Activated naive CD8-positive, alpha-beta T cell treated with anti-CD3 and anti-CD28 coated beads, Interleukin-2, amount 10 ng/mL, durations not matched to agents 7 days and 5 days (primary cell): ENCODE measurements at regions of chr3 and their contacts with region 1.

Region 1: DNA sequence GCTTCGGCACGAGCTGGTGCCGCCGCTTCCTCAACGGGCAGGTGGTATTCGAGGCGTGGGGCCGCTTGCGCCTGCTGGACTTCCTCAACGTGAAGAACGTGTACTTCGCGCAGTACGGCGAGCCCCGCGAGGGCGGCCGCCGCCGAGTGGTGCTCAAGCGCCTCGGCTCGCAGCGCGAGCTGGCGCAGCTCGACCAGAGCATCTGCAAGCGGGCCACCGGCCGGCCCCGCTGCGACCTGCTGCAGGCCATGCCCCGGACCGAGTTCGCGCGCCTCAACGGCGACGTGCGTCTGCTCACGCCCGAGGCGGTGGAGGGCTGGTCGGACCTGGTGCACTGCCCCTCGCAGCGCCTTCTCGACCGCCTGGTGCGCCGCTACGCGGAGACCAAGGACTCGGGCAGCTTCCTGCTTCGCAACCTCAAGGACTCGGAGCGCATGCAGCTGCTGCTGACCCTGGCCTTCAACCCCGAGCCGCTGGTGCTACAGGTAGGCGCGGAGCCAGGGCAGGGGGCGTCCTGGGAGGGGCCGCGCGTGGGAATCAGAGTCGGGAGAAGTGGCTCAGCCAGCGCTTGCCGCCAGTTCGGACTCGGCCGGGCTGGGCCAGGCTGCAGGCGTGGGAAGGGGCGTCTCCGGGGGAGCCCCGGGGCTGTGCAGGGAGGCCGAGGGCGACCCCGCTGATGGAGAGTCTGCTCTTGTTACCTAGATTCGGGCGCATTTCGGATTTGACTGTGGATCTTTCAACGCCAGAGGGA is 1.1 kb downstream of the DIPK2A start:
- DNase-seq: peak; percentile 78
- ATAC-seq: peak; percentile 15
- H3K4me3 Mint-ChIP-seq: peak overlapping the region; percentile 96
- H3K27ac Mint-ChIP-seq: peak overlapping the region; percentile 96
- H3K4me1 Mint-ChIP-seq: peaks cover 22% of the 10 kb centered on the region
- H3K27me3 Mint-ChIP-seq: peaks cover 10% of the 10 kb centered on the region

Region 2: GRCh38 chr3:143001369-143002082 is 971.2 kb before region 1 on chr3 and contains the start of gene U2SURP:
- POLR2A ChIA-PET with region 1: interaction called, 19 read pairs
- DNase-seq: peak; percentile 86
- ATAC-seq: peak; percentile 88
- H3K4me3 Mint-ChIP-seq: peak within 1 kb of the TSS; percentile 91
- H3K27ac Mint-ChIP-seq: peak within 1 kb of the TSS; percentile 99
- H3K4me1 Mint-ChIP-seq: peaks cover 21% of the 10 kb centered on the region
- H3K27me3 Mint-ChIP-seq: peaks cover 2% of the 10 kb centered on the region
- total RNA-seq, gene U2SURP: 134 to 147 TPM

Region 3: DNA sequence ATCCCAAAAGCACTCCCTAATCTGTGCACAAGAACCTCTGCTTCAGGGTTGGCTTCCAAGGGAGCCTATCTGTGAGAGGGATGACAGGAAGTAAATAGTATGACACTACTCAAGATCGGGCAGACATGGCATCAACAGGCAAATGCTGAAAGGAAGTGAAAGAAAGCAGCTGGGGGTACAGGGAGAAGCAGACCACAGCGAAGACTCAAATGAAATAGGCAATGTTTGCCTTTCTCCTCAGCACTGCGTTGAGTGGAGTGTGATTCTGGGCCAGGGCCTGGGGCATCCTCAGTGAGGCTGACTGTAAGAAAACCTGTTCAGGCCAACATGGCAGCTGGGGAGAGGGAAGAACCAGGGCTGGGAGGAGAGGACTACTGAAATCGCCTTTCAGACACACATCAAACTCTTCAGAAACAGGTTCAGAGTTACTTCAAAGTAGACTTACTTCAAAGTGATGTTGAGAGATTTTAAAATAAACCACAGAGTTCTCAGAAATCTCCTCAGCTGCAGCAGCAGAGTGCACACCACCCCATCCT is 221.0 kb before region 1 on chr3:
- POLR2A ChIA-PET with region 1: interaction called, 19 read pairs
- DNase-seq: peak; percentile 63
- ATAC-seq: peak; percentile 88
- H3K4me3 Mint-ChIP-seq: peak overlapping the region; percentile 41
- H3K27ac Mint-ChIP-seq: peak overlapping the region; percentile 95
- H3K4me1 Mint-ChIP-seq: peaks cover 20% of the 10 kb centered on the region
- H3K27me3 Mint-ChIP-seq: no peaks in the 10 kb centered on the region

Region 4: GRCh38 chr3:143825513-143825912 is 147.2 kb before region 1 on chr3:
- POLR2A ChIA-PET with region 1: interaction called, 13 read pairs
- DNase-seq: no peak
- ATAC-seq: peak; percentile 94
- H3K4me3 Mint-ChIP-seq: peak overlapping the region; percentile 21
- H3K27ac Mint-ChIP-seq: peak overlapping the region; percentile 75
- H3K4me1 Mint-ChIP-seq: peaks cover 24% of the 10 kb centered on the region
- H3K27me3 Mint-ChIP-seq: no peaks in the 10 kb centered on the region

Region 5: DNA sequence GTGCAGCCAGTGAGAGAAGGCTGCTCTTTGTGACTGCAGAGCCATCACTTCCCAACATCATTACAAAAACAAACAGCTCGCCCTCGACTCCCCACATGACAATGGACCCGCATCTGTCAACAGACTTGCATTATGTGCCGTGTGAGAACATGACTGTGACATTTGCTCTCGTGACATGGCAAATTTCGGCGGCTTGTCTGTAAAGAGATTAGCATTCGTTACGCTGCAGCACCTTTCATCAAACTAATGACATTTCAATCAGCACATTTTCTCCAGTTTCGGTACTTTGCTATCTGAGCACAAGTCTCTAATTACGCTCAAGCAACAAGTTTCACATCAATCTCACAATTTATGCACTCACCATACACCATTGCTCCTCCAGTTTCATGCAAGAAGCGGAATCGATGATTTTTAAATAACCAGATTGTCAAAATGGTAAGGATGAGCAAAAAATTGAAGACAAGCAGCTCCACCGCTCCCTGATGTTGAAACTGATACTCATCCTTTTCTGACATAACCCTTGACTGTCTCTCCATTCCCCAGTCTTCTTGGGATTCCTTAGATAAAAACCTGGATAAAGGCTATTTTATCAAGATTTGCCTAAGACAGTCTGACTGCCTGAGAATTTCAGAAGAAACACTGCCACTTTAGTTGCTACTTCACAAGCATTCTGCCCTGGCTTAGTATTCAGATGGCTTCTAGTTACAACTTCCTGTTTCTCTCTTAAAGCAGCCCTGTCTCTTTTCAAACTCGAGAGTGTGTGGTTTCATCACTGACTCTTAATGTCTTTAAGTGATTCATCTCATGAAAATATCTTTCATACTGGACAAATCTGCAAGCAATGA is 124.7 kb before region 1 on chr3 and contains the start of gene SLC9A9:
- POLR2A ChIA-PET with region 1: interaction called, 14 read pairs
- DNase-seq: peak; percentile 31
- ATAC-seq: peak; percentile 94
- H3K4me3 Mint-ChIP-seq: peak within 1 kb of the TSS; percentile 89
- H3K27ac Mint-ChIP-seq: peak within 1 kb of the TSS; percentile 90
- H3K4me1 Mint-ChIP-seq: peaks cover 21% of the 10 kb centered on the region
- H3K27me3 Mint-ChIP-seq: peaks cover 3% of the 10 kb centered on the region
- total RNA-seq, gene SLC9A9: 9.9 to 13.2 TPM

Region 6: GRCh38 chr3:143952569-143953072 is 20.1 kb before region 1 on chr3:
- POLR2A ChIA-PET with region 1: interaction called, 18 read pairs
- DNase-seq: no peak
- ATAC-seq: no peak
- H3K4me3 Mint-ChIP-seq: no peak overlapping the region
- H3K27ac Mint-ChIP-seq: no peak overlapping the region
- H3K4me1 Mint-ChIP-seq: peaks cover 9% of the 10 kb centered on the region
- H3K27me3 Mint-ChIP-seq: peaks cover 5% of the 10 kb centered on the region